Naive thymus-derived CD8-positive, alpha-beta T cell (primary cell): ENCODE measurements at regions of chr13 and their contacts with region 1.

Region 1: DNA sequence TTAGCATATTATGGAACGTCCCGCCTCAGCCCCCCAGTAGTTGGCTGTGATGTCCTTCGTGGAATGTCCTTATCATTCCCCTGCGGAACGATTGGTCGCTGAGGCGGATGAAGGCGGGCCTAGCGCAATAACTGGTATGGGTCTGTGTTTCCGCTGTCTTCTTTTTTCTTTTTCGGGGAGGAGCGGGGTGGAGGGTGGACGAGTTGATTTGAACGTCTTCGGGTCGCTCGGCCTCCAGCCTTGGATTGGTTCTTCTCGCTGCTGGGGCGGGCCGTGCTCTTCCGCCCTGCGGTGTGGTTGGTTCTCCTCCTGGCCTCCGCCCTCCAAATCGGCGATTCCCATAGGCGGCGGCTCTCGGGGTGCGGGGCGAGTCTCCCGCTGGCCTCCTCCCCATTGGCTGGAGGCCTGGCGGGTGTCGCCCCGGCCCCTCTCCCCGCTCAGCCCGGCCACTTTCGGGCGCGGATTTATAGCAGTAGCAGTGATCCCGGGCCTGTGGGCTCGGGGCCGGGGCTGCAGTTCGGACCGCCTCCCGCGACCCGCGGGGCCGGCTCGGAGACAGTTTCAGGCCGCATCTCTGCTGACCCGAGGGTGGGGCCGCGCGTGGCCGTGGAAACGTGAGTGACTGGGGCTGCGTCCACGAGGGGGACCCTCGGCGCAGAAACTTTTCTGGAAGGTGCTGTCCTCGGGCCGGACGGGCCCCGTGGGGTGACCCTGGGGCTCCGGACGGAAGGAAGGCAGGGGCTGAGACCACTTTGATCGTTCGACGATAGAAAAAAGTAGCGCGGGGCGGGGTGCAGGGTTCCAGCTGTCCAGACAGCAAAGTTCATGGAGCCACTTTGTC is 2.1 kb downstream of the ING1 start:
- DNase-seq: peak; percentile 90 to 99 (median 96)
- ATAC-seq: peak; percentile 61 to 64
- H3K4me3 Mint-ChIP-seq: peak overlapping the region; percentile 92 to 100 (median 99)
- H3K27ac Mint-ChIP-seq: peak overlapping the region; percentile 96 to 99 (median 99)
- H3K4me1 Mint-ChIP-seq: peaks cover 15 to 47% (median 39%) of the 10 kb centered on the region in 4 donors
- H3K27me3 Mint-ChIP-seq: peaks cover 0 to 4% (median 0%) of the 10 kb centered on the region in 5 donors

Region 2: DNA sequence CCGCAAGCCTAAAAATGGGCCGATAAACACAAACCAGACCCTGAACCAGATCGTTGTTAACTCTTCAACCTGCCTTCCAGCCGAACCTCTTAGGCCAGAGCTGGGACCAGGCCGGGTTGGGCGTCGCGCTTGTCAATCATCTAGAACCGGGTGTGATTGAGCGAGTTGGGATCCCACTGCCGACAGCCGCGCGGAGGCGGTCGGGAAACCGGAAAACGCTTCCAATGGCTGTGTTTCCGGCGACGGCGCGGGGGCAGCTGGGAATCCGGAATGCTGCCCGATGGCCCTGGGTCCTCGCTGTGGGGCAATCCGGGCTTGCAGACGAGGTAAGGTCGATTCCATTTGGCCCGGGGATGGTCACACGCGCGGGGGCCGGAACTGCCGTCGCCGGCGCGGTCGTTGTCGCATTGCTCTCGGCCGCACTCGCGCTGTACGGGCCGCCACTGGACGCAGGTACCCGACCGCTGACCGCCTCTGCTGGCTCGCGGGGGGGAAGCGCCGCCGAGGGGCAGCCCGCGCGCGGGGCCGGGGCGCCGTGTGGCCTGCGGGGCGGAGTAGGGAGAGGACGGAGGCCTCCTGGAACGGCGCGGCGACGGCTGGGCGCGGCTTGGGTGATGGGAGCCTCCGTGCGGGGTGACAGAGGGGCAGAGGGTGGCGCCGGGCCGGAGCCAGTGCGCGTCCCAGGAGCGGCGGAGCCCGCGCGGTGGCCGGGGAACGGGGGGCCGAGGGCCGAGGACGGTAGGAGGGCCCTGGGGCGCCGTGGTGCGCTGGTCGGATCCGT is 100.1 kb before region 1 on chr13 and contains the start of gene NAXD:
- POLR2A ChIA-PET with region 1: interaction called, 46 read pairs
- DNase-seq: peak; percentile 56 to 90 (median 72)
- ATAC-seq: peak; percentile 89
- H3K4me3 Mint-ChIP-seq: peak within 1 kb of the TSS; percentile 82 to 97 (median 94)
- H3K27ac Mint-ChIP-seq: peak within 1 kb of the TSS; percentile 89 to 98 (median 95)
- H3K4me1 Mint-ChIP-seq: peaks cover 6 to 42% (median 38%) of the 10 kb centered on the region in 4 donors
- H3K27me3 Mint-ChIP-seq: peaks cover 0 to 2% (median 0%) of the 10 kb centered on the region in 5 donors
- polyA plus RNA-seq, gene NAXD: 10.4 to 26.9 (median 18.1) TPM

Region 3: DNA sequence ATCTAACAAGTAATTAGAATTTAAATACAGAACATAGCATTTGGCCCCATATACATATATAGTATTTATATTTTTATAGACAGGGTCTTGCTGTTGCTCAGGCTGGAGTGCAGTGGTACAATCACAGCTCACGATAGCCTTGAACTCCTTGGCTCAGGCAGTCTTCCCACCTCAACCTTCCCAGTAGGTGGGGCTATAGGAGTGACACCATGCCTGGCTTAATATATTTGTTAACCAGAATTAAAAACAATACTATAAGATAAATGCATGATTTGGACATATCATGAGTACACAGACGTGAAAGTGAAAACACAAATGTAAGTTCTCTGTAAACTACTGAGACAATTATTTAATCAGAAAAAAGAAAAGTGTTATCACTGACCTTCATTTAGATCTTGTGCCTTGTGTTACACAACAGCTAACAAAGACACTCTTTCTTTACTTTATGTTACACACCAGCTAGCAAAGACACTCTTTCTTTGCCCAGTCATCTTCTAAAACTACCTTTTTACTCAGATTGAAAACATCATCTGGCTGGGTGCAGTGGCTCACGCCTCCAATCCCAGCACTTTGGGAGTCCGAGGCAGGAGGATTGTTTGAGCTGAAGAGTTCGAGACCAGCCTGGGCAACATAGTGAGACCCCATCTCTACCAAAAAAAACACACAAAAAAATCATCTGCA is 32.3 kb before region 1 on chr13:
- POLR2A ChIA-PET with region 1: interaction called, 17 read pairs
- DNase-seq: peak in 6 of 10 donors; percentile 8 to 73 (median 28)
- ATAC-seq: peak; percentile 70
- H3K4me3 Mint-ChIP-seq: peak overlapping the region in 1 of 10 donors; percentile 29
- H3K27ac Mint-ChIP-seq: peak overlapping the region in 3 of 10 donors; percentile 17 to 34 (median 22)
- H3K4me1 Mint-ChIP-seq: peaks cover 5 to 8% (median 6%) of the 10 kb centered on the region in 4 donors
- H3K27me3 Mint-ChIP-seq: no peaks in the 10 kb centered on the region

Region 4: GRCh38 chr13:110746443-110746842 is 30.8 kb after region 1 on chr13:
- POLR2A ChIA-PET with region 1: no interaction called
- DNase-seq: no peak
- ATAC-seq: no peak
- H3K4me3 Mint-ChIP-seq: no peak overlapping the region
- H3K27ac Mint-ChIP-seq: no peak overlapping the region
- H3K4me1 Mint-ChIP-seq: no peaks in the 10 kb centered on the region
- H3K27me3 Mint-ChIP-seq: peaks cover 0 to 2% (median 0%) of the 10 kb centered on the region in 5 donors

Region 5: DNA sequence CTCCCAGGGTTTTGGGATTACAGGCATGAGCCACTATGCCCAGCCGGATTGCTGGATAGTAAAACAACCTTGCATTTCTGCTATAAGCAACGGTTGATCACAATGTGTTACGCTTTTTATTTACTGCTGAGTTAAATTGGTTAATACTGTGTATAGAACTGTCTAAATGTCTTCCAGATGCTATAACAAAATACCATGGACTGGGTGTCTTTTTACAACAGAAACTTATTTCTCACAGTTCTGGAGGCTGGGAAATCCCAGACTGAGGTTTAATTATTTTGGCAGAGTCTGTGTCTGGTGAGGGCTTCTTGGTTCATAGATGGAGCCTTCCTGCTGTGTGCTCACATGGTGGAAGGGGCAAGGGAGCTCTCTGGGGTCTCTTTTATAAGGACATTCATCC is 63.4 kb after region 1 on chr13:
- POLR2A ChIA-PET with region 1: no interaction called
- DNase-seq: no peak
- ATAC-seq: no peak
- H3K4me3 Mint-ChIP-seq: no peak overlapping the region
- H3K27ac Mint-ChIP-seq: no peak overlapping the region
- H3K4me1 Mint-ChIP-seq: no peaks in the 10 kb centered on the region
- H3K27me3 Mint-ChIP-seq: peaks cover 5 to 15% (median 9%) of the 10 kb centered on the region in 5 donors

Region 6: GRCh38 chr13:110822669-110822945 is 107.0 kb after region 1 on chr13:
- POLR2A ChIA-PET with region 1: interaction called, 23 read pairs
- DNase-seq: peak in 3 of 10 donors; percentile 28 to 38 (median 29)
- ATAC-seq: peak; percentile 77 to 83
- H3K4me3 Mint-ChIP-seq: peak overlapping the region; percentile 82 to 95 (median 91)
- H3K27ac Mint-ChIP-seq: peak overlapping the region; percentile 68 to 95 (median 91)
- H3K4me1 Mint-ChIP-seq: peaks cover 0 to 18% (median 11%) of the 10 kb centered on the region in 4 donors
- H3K27me3 Mint-ChIP-seq: no peaks in the 10 kb centered on the region

Region 7: GRCh38 chr13:110915057-110915873 is 199.7 kb after region 1 on chr13 and contains the start of gene ANKRD10:
- POLR2A ChIA-PET with region 1: interaction called, 77 read pairs
- DNase-seq: peak; percentile 82 to 98 (median 90)
- ATAC-seq: peak; percentile 71 to 74
- H3K4me3 Mint-ChIP-seq: peak within 1 kb of the TSS; percentile 86 to 96 (median 92)
- H3K27ac Mint-ChIP-seq: peak within 1 kb of the TSS; percentile 73 to 96 (median 93)
- H3K4me1 Mint-ChIP-seq: peaks cover 7 to 54% (median 47%) of the 10 kb centered on the region in 4 donors
- H3K27me3 Mint-ChIP-seq: peaks cover 0 to 1% (median 0%) of the 10 kb centered on the region in 5 donors
- polyA plus RNA-seq, gene ANKRD10: 56.1 to 65.3 (median 60.3) TPM